ENCODE measurements at regions of chr12 and their contacts with region 1.

Region 1: GRCh38 chr12:96985480-96986362 is 78.7 kb downstream of the NEDD1 start:
- DNase-seq: peak; percentile 79 to 81
- H3K4me3 ChIP-seq: peak overlapping the region in 2 of 3 donors; percentile 37 to 41
- H3K27ac ChIP-seq: peak overlapping the region; percentile 70 to 83 (median 72)
- H3K4me1 ChIP-seq: peaks cover 0 to 11% of the 10 kb centered on the region in 2 donors
- H3K27me3 ChIP-seq: no peaks in the 10 kb centered on the region
- CTCF ChIP-seq: peak; percentile 31 to 98 (median 91)
- POLR2A ChIP-seq: peak in 1 of 2 donors; percentile 54

Region 2: DNA sequence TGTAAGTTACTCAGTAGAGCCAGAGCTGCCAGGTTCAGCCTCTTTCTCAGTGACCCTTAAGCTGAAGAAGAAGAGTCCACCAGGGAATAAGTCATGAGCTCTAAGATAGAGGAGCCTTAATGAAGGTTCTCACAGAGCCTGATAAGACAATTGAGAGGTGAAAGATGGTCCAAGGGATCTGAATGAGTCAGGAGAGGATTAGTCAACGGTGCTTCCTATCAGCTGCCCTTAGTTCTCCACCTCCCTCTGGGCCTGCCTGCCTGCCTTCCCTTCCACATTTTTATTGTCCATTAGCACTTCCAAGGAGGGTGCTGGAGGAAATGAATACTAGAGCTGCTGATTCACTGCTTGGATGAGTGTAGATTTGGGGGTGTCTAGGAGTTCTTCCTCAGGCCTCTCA is 315.2 kb after region 1 on chr12:
- intact Hi-C with region 1: loop called (anchors 5 kb)
- DNase-seq: no peak
- H3K4me3 ChIP-seq: no peak overlapping the region
- H3K27ac ChIP-seq: no peak overlapping the region
- H3K4me1 ChIP-seq: no peaks in the 10 kb centered on the region
- H3K27me3 ChIP-seq: no peaks in the 10 kb centered on the region
- CTCF ChIP-seq: no peak
- POLR2A ChIP-seq: no peak

Region 3: DNA sequence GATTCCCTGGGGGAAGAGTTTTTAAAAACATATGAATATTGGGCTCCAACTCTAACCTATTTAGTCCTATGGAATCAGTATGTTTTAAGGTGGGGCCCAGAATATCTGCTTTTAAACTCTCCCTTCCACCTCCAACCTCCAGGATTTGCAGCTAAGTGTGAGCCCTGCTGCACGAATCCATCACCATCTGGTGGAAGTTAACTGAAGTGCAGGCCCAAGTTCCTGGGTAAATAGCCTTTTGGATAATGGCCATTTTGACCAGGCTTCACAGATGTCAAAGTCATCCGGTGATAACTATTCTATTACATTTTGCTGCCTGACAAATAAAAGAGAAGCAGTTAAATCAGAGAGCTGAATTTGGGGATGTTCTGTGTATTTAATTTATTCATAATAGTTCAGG is 418.8 kb after region 1 on chr12:
- intact Hi-C with region 1: loop called (anchors 10 kb)
- DNase-seq: peak; percentile 62 to 64
- H3K4me3 ChIP-seq: no peak overlapping the region
- H3K27ac ChIP-seq: no peak overlapping the region
- H3K4me1 ChIP-seq: no peaks in the 10 kb centered on the region
- H3K27me3 ChIP-seq: no peaks in the 10 kb centered on the region
- CTCF ChIP-seq: peak; percentile 59 to 97 (median 90)
- POLR2A ChIP-seq: no peak